MCF 10A (cell line): ENCODE measurements at regions of chr3 and their contacts with region 1.

Region 1: GRCh38 chr3:100603469-100603868 is 5.9 kb upstream of the ADGRG7 start:
- DNase-seq: peak; percentile 67
- H3K4me3 Mint-ChIP-seq: no peak overlapping the region
- H3K27ac Mint-ChIP-seq: peak overlapping the region; percentile 49
- H3K4me1 Mint-ChIP-seq: peaks cover 36% of the 10 kb centered on the region
- H3K27me3 Mint-ChIP-seq: no peaks in the 10 kb centered on the region
- CTCF ChIP-seq: peak; percentile 36

Region 2: DNA sequence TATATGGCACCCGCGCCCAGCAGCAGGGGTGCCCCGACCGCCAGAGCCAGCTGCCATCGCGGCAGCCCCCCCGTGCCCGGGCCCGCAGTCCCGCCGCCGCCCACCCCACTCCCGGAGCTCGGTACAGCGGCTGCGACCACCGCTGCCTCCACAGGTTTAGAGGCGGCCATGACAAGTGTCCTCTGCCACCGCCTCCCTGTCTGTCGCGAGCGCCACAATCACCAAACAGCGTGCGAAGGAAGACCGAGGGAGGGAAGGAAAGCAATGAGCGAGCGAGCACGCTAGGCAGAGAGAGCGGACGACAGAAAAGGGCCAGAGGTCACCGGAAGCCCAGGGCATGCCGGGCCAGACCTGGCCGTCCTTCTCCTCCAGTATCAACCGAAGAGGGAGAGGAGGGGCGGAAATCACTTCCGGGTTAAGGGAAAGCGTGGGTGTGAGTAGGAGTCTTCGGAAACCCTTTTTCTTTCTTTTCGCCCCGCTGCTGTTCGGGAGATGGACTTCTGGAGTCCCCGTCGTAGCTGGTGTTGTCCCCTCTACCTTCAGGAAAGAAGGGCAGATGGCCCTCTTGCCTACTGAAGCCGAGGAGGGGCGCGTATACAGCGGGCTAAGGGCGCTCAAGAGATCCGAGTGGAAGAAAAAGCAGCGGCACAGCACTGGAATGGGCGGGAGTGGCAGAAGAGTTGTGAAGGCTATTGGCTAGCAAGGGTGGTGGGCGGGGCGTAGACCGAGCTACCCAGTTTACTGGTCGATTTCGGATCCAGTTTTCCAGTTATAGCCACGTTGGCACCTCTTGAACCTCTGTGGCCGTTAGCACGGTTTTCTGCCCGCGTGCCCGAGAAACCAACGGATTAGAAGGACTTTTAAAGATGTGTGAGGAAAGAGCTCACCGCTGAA is 202.4 kb before region 1 on chr3 and contains the starts of genes LNP1 and TOMM70:
- CTCF ChIA-PET with region 1: no interaction called
- POLR2A ChIA-PET with region 1: interaction called, 23 read pairs
- intact Hi-C with region 1: no loop called
- DNase-seq: peak; percentile 98
- H3K4me3 Mint-ChIP-seq: peak within 1 kb of the TSS; percentile 98
- H3K27ac Mint-ChIP-seq: peak within 1 kb of the TSS; percentile 97
- H3K4me1 Mint-ChIP-seq: peaks cover 31% of the 10 kb centered on the region
- H3K27me3 Mint-ChIP-seq: no peaks in the 10 kb centered on the region
- CTCF ChIP-seq: no peak
- total RNA-seq, gene LNP1: 1.2 and 1.7 TPM in 2 replicates
- total RNA-seq, gene TOMM70: 55.1 and 58.2 TPM in 2 replicates

Region 3: DNA sequence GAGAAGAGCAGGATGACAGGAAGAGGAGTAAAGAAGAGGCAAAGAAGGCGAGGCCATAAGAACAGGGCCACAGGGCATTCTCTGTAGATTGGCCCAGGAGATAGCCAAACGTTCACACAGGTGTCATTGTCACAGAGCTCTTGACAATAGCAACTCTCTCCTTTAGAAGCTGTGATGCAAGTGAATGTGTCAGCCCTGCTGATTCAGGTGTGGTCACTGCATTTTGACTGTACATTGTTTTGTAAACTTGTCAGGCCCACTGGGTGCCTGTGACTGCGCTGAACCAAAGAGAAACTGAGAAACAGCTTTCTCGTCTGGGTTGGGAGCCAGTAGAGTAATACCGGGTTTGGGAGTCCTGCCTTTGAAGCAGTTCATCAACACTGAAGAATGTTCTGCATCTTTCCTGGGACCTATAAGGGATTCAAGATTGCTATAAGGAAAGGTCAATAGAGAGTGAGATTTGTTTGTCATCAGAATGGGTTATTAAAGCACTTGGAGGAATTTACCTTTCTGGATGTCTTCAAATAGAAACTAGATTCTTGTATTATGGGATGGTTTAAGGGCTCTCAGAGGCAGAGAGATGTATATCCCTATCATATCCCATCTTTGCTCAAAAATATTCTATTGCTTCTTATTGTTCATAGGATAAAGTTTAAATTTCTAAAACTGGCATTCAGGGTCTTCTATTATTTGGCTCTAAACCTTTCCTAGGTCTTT is 65.7 kb before region 1 on chr3:
- CTCF ChIA-PET with region 1: no interaction called
- POLR2A ChIA-PET with region 1: no interaction called
- intact Hi-C with region 1: no loop called
- DNase-seq: no peak
- H3K4me3 Mint-ChIP-seq: no peak overlapping the region
- H3K27ac Mint-ChIP-seq: peak overlapping the region; percentile 25
- H3K4me1 Mint-ChIP-seq: peaks cover 43% of the 10 kb centered on the region
- H3K27me3 Mint-ChIP-seq: no peaks in the 10 kb centered on the region
- CTCF ChIP-seq: no peak

Region 4: GRCh38 chr3:100590114-100590839 is 13.2 kb before region 1 on chr3:
- CTCF ChIA-PET with region 1: interaction called, 65 read pairs
- POLR2A ChIA-PET with region 1: interaction called, 3 read pairs
- intact Hi-C with region 1: no loop called
- DNase-seq: peak; percentile 83
- H3K4me3 Mint-ChIP-seq: no peak overlapping the region
- H3K27ac Mint-ChIP-seq: no peak overlapping the region
- H3K4me1 Mint-ChIP-seq: peaks cover 8% of the 10 kb centered on the region
- H3K27me3 Mint-ChIP-seq: no peaks in the 10 kb centered on the region
- CTCF ChIP-seq: peak; percentile 75

Region 5: DNA sequence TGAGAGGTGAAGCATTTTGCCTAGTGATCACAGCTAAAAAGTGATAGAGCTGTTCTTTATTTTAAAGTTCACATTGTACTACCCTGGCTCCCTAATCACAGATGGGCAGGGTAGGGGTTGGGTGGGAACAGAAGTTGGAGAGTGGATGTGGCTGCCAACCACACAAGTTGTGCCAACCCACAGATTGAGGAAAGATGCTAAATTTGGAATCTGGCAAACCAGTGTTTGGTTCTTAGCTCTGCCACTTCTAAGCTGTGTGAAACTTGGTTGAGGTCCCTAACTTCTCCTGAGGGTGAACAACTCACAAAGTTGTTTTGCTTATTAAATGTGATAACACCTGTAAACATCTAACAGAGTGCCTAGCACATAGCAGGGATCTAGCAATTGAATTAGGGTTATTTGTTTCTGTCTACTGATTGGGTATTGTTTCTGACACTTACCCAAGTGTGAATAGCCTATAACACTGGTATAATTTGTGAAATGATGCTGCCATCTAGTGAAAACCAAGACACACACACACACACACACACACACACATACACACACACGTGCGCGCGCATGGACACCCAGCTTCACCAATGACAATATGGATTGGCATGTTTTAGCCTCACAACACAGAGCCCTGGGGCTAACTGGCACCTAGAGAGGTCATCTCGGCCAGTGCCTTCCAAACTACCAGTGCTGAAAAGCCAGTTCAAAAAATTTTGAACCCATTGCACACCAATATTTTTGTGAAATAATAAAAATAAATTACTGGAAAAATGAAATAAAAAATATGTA is 31.2 kb after region 1 on chr3:
- CTCF ChIA-PET with region 1: interaction called, 18 read pairs
- POLR2A ChIA-PET with region 1: interaction called, 12 read pairs
- intact Hi-C with region 1: no loop called
- DNase-seq: peak; percentile 72
- H3K4me3 Mint-ChIP-seq: no peak overlapping the region
- H3K27ac Mint-ChIP-seq: no peak overlapping the region
- H3K4me1 Mint-ChIP-seq: no peaks in the 10 kb centered on the region
- H3K27me3 Mint-ChIP-seq: no peaks in the 10 kb centered on the region
- CTCF ChIP-seq: no peak

Region 6: GRCh38 chr3:100708967-100709841 is 105.7 kb after region 1 on chr3 and contains the start of gene TFG:
- CTCF ChIA-PET with region 1: interaction called, 110 read pairs
- POLR2A ChIA-PET with region 1: interaction called, 100 read pairs
- intact Hi-C with region 1: loop called (anchors 1 kb)
- DNase-seq: peak; percentile 99
- H3K4me3 Mint-ChIP-seq: peak within 1 kb of the TSS; percentile 89
- H3K27ac Mint-ChIP-seq: peak within 1 kb of the TSS; percentile 96
- H3K4me1 Mint-ChIP-seq: peaks cover 44% of the 10 kb centered on the region
- H3K27me3 Mint-ChIP-seq: no peaks in the 10 kb centered on the region
- CTCF ChIP-seq: no peak
- total RNA-seq, gene TFG: 162 and 168 TPM in 2 replicates

Region 7: GRCh38 chr3:100737334-100737733 is 133.9 kb after region 1 on chr3:
- CTCF ChIA-PET with region 1: interaction called, 5 read pairs
- POLR2A ChIA-PET with region 1: no interaction called
- intact Hi-C with region 1: loop called (anchors 5 kb)
- DNase-seq: peak; percentile 35
- H3K4me3 Mint-ChIP-seq: no peak overlapping the region
- H3K27ac Mint-ChIP-seq: no peak overlapping the region
- H3K4me1 Mint-ChIP-seq: peaks cover 6% of the 10 kb centered on the region
- H3K27me3 Mint-ChIP-seq: no peaks in the 10 kb centered on the region
- CTCF ChIP-seq: peak; percentile 29

Region 8: GRCh38 chr3:100796556-100796955 is 193.1 kb after region 1 on chr3:
- CTCF ChIA-PET with region 1: interaction called, 7 read pairs
- POLR2A ChIA-PET with region 1: no interaction called
- intact Hi-C with region 1: loop called (anchors 1 kb)
- DNase-seq: peak; percentile 45
- H3K4me3 Mint-ChIP-seq: no peak overlapping the region
- H3K27ac Mint-ChIP-seq: no peak overlapping the region
- H3K4me1 Mint-ChIP-seq: peaks cover 7% of the 10 kb centered on the region
- H3K27me3 Mint-ChIP-seq: no peaks in the 10 kb centered on the region
- CTCF ChIP-seq: peak; percentile 28